Naive thymus-derived CD4-positive, alpha-beta T cell (primary cell): ENCODE measurements at regions of chr1 and their contacts with region 1.

Region 1: GRCh38 chr1:119743781-119744597 is 24.7 kb downstream of the HMGCS2 start:
- DNase-seq: peak in 7 of 9 donors; percentile 22 to 51 (median 37)
- ATAC-seq: peak; percentile 67
- H3K4me3 ChIP-seq: no peak overlapping the region
- H3K4me3 Mint-ChIP-seq: no peak overlapping the region
- H3K27ac ChIP-seq: no peak overlapping the region
- H3K27ac Mint-ChIP-seq: no peak overlapping the region
- H3K4me1 ChIP-seq: no peaks in the 10 kb centered on the region
- H3K4me1 Mint-ChIP-seq: peaks cover 0 to 13% (median 0%) of the 10 kb centered on the region in 7 donors
- H3K27me3 ChIP-seq: no peaks in the 10 kb centered on the region
- H3K27me3 Mint-ChIP-seq: no peaks in the 10 kb centered on the region

Region 2: DNA sequence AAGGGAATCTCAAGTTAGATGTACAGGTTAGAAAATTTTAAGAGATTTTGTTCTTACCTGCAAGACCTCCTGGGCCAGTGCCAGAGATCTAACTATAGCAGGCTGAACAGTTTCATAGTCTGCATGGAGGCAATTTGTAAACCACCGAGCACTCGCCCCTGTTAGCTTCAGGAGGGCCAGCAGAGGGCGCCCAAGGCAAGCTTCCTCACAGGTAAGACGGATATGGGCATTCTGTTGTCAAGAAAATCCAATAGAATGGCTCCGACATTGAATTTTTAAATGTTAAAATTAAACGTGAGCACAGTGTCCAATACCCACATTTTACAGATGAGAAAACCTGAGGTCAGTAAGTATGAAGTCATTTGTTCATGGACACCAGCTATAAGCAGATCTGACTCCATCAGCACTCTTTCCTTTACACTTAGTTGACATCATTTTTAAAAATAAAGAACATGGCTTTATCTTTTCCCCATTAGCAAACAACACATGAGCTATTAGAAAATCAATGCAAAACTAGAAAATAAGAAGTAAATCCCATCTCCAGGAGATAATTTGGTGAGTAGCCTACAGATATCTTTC is 65.1 kb after region 1 on chr1:
- CTCF ChIA-PET with region 1: no interaction called
- POLR2A ChIA-PET with region 1: no interaction called
- intact Hi-C with region 1: loop called in 1 of 2 experiments (anchors 2 kb)
- DNase-seq: peak; percentile 29 to 68 (median 57)
- ATAC-seq: peak; percentile 85
- H3K4me3 ChIP-seq: no peak overlapping the region
- H3K4me3 Mint-ChIP-seq: peak overlapping the region in 3 of 10 donors; percentile 16 to 51 (median 41)
- H3K27ac ChIP-seq: no peak overlapping the region
- H3K27ac Mint-ChIP-seq: no peak overlapping the region
- H3K4me1 ChIP-seq: no peaks in the 10 kb centered on the region
- H3K4me1 Mint-ChIP-seq: peaks cover 0 to 10% (median 5%) of the 10 kb centered on the region in 7 donors
- H3K27me3 ChIP-seq: peaks cover 0 to 4% of the 10 kb centered on the region in 2 donors
- H3K27me3 Mint-ChIP-seq: peaks cover 10 to 62% (median 16%) of the 10 kb centered on the region in 5 donors

Region 3: DNA sequence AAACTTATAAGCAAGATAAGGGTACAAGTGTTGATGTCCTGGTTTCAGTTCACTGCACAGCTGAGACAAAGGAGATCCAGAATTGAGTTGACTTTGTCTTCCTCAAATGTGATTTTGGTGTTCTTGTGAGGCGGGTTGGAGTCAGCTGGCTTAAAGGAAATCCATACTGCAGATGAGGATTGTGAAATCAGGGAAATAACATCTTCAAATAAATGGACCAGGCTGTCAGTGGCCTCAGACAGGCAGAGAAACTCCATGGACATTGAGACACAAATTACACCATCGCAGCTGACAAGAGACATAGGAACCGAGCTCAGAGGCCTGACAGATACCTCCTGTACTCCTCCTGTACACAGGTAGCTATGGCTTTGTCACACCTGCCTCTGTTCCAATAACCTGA is 94.2 kb after region 1 on chr1:
- CTCF ChIA-PET with region 1: no interaction called
- POLR2A ChIA-PET with region 1: no interaction called
- intact Hi-C with region 1: no loop called
- DNase-seq: no peak
- ATAC-seq: no peak
- H3K4me3 ChIP-seq: no peak overlapping the region
- H3K4me3 Mint-ChIP-seq: no peak overlapping the region
- H3K27ac ChIP-seq: no peak overlapping the region
- H3K27ac Mint-ChIP-seq: no peak overlapping the region
- H3K4me1 ChIP-seq: no peaks in the 10 kb centered on the region
- H3K4me1 Mint-ChIP-seq: peaks cover 0 to 2% (median 0%) of the 10 kb centered on the region in 7 donors
- H3K27me3 ChIP-seq: no peaks in the 10 kb centered on the region
- H3K27me3 Mint-ChIP-seq: peaks cover 2 to 46% (median 18%) of the 10 kb centered on the region in 5 donors

Region 4: DNA sequence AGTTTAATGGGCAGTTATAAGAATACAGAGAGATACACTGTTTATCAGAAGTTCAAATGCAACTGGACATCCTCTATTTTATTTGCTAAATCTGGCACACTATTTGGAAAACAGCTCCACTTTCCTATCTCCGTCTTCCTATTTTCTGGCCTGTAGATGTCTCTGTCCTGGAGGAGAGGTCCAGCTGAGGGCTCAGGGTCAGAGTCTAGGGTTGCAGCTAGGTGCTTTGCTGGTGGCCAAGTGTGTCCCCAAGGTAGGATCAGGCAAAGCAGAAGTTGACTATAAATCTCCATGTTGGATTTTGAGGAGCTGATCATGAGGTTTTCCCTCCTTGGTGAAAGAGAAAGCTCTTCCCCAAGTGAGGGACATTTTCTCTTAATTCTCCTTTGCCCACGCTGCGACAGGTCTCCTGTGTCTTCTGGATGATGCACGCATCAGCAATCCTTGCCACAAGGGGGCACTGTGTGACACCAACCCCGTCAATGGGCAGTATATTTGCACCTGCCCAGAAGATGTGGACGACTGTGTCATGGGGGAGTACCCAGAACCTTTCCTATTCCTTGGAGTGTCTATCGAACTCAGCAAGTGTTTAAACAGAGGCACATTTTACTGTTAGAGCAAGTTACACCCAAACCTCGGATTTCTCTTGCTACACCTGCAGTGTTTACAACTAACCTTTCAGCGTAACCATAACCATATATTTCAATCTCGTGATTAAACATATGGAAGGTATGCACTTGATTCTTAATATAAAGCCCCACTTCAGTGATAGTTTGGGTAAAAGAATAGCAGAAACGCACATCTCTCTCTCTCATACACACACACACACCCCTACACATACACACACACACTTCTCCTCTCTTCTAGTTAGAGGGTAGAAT is 142.2 kb after region 1 on chr1:
- CTCF ChIA-PET with region 1: no interaction called
- POLR2A ChIA-PET with region 1: no interaction called
- intact Hi-C with region 1: loop called in 1 of 2 experiments (anchors 1 kb)
- DNase-seq: peak in 8 of 9 donors; percentile 20 to 54 (median 28)
- ATAC-seq: peak; percentile 79
- H3K4me3 ChIP-seq: no peak overlapping the region
- H3K4me3 Mint-ChIP-seq: no peak overlapping the region
- H3K27ac ChIP-seq: no peak overlapping the region
- H3K27ac Mint-ChIP-seq: no peak overlapping the region
- H3K4me1 ChIP-seq: no peaks in the 10 kb centered on the region
- H3K4me1 Mint-ChIP-seq: peaks cover 0 to 10% (median 0%) of the 10 kb centered on the region in 7 donors
- H3K27me3 ChIP-seq: no peaks in the 10 kb centered on the region
- H3K27me3 Mint-ChIP-seq: peaks cover 10 to 37% (median 20%) of the 10 kb centered on the region in 5 donors

Region 5: DNA sequence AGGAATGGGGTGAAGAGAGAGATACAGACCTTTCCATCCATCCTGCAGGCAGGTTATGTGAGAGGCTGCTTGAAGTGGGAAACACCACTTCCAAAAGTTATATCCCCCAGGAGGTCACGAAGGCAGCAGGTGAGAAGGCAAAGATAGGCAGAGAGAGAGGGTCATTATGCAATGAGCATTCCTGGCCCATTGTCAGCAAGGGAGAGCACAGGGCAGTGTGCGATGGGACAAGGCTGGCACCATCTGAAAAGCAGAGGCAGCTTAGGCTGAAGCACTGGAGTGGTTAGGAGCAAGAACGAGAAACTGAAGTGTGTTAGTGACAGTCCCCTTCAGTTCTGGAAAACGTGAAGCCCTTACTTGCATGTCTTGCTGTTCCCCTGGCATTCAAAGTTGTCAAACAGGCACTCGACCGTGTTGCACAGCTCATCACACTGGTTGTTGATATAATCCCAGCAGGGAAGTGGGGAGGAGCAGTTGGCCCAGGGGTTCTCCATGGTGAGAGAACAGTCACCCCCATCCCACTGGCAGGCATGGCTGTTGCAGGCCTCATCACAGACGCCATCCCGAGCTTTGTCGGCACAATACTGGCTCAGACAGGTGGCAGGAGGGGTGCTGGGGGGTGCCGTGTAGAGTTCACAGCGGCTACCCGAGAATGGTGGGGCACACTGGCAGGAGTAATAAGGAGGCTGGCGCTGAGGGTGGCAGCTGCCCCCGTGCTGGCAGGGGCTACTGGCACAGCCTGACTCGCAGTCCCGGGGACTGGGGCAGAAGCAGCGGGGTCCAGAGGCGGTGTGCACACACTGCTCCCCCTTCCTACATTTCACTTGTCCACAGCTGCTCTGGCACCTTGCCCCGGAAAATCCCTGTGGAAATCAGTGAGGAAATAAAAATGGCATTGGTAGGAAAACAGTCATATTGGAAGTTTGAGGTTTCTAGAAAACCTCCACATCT is 181.2 kb after region 1 on chr1:
- CTCF ChIA-PET with region 1: no interaction called
- POLR2A ChIA-PET with region 1: no interaction called
- intact Hi-C with region 1: no loop called
- DNase-seq: no peak
- ATAC-seq: no peak
- H3K4me3 ChIP-seq: no peak overlapping the region
- H3K4me3 Mint-ChIP-seq: no peak overlapping the region
- H3K27ac ChIP-seq: no peak overlapping the region
- H3K27ac Mint-ChIP-seq: peak overlapping the region in 2 of 9 donors; percentile 25 to 52
- H3K4me1 ChIP-seq: no peaks in the 10 kb centered on the region
- H3K4me1 Mint-ChIP-seq: peaks cover 0 to 2% (median 0%) of the 10 kb centered on the region in 7 donors
- H3K27me3 ChIP-seq: no peaks in the 10 kb centered on the region
- H3K27me3 Mint-ChIP-seq: no peaks in the 10 kb centered on the region